ENCODE measurements at regions of chr3 and their contacts with region 1.

Region 1: DNA sequence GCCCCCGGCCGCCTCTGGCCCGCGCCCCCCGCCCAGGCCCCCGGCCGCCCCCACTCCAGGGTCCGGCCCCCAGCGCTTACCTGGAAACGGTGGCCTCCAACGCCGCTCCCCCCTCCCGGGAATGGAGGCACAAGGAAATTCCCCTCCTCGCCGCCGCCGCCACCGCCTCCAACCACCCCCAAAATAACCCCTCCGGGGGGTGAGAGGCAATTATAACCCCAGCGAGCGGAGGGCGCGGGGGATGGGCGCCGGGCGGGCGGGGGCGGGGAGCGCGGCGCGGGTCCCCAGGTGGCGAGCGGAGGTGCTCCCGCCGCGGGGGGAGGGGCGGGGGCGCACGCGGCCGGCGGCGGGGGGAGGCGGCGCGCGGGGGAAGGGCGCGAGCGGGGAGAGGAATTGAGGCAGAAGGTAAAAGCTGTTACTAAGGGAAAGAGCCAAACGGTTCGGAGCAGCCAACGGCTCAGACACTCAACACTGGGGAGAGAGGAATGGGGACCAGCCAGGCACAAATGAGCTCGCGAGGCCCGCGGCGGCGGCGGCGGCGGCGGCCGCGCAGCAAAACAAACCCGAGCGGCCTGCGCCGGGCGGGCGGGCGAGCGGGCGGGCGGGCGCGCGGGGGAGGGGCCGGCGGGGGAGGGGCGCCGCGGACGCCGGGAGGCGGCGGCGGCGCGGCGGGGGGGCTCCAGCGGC is at the start of gene TBL1XR1:
- DNase-seq: peak; percentile 94
- ATAC-seq: peak; percentile 77
- H3K4me3 ChIP-seq: peak within 1 kb of the TSS; percentile 96
- H3K27ac ChIP-seq: peak within 1 kb of the TSS; percentile 100
- H3K4me1 ChIP-seq: peaks cover 10% of the 10 kb centered on the region
- H3K27me3 ChIP-seq: no peaks in the 10 kb centered on the region
- CTCF ChIP-seq: no peak
- POLR2A ChIP-seq: no peak
- RAD21 ChIP-seq: peak; percentile 35; the same call in 1 of the 2 replicates
- total RNA-seq, gene TBL1XR1: 170 and 181 TPM in 2 replicates

Region 2: GRCh38 chr3:177050501-177051237 is 146.5 kb before region 1 on chr3:
- CTCF ChIA-PET with region 1: no interaction called
- POLR2A ChIA-PET with region 1: no interaction called
- dilution Hi-C with region 1: no loop called
- in situ Hi-C with region 1: no loop called
- intact Hi-C with region 1: loop called (anchors 1 kb)
- DNase-seq: peak; percentile 64
- ATAC-seq: peak; percentile 83
- H3K4me3 ChIP-seq: no peak overlapping the region
- H3K27ac ChIP-seq: no peak overlapping the region; the same call in 1 of the 2 replicates
- H3K4me1 ChIP-seq: no peaks in the 10 kb centered on the region
- H3K27me3 ChIP-seq: no peaks in the 10 kb centered on the region
- CTCF ChIP-seq: peak; percentile 64
- POLR2A ChIP-seq: 0 out of 2 replicates have a peak, but pooled peaks have one; percentile 35
- RAD21 ChIP-seq: peak; percentile 78

Region 3: GRCh38 chr3:177089110-177089509 is 108.1 kb before region 1 on chr3:
- CTCF ChIA-PET with region 1: no interaction called
- POLR2A ChIA-PET with region 1: no interaction called
- dilution Hi-C with region 1: no loop called
- in situ Hi-C with region 1: no loop called
- intact Hi-C with region 1: no loop called
- DNase-seq: no peak
- ATAC-seq: no peak; the same call in 1 of the 2 replicates
- H3K4me3 ChIP-seq: no peak overlapping the region
- H3K27ac ChIP-seq: no peak overlapping the region
- H3K4me1 ChIP-seq: peaks cover 5% of the 10 kb centered on the region
- H3K27me3 ChIP-seq: no peaks in the 10 kb centered on the region
- CTCF ChIP-seq: no peak
- POLR2A ChIP-seq: no peak
- RAD21 ChIP-seq: no peak

Region 4: GRCh38 chr3:177359593-177360357 is 162.6 kb after region 1 on chr3:
- CTCF ChIA-PET with region 1: no interaction called
- POLR2A ChIA-PET with region 1: interaction called, 3 read pairs
- dilution Hi-C with region 1: no loop called
- in situ Hi-C with region 1: loop called (anchors 5 kb)
- intact Hi-C with region 1: loop called (anchors 1 kb)
- DNase-seq: peak; percentile 99
- ATAC-seq: peak; percentile 90
- H3K4me3 ChIP-seq: peak overlapping the region; percentile 5; the same call in 1 of the 2 replicates
- H3K27ac ChIP-seq: peak overlapping the region; percentile 59
- H3K4me1 ChIP-seq: peaks cover 27% of the 10 kb centered on the region
- H3K27me3 ChIP-seq: no peaks in the 10 kb centered on the region
- CTCF ChIP-seq: no peak
- POLR2A ChIP-seq: 0 out of 2 replicates have a peak, but pooled peaks have one; percentile 28
- RAD21 ChIP-seq: peak; percentile 71

Region 5: DNA sequence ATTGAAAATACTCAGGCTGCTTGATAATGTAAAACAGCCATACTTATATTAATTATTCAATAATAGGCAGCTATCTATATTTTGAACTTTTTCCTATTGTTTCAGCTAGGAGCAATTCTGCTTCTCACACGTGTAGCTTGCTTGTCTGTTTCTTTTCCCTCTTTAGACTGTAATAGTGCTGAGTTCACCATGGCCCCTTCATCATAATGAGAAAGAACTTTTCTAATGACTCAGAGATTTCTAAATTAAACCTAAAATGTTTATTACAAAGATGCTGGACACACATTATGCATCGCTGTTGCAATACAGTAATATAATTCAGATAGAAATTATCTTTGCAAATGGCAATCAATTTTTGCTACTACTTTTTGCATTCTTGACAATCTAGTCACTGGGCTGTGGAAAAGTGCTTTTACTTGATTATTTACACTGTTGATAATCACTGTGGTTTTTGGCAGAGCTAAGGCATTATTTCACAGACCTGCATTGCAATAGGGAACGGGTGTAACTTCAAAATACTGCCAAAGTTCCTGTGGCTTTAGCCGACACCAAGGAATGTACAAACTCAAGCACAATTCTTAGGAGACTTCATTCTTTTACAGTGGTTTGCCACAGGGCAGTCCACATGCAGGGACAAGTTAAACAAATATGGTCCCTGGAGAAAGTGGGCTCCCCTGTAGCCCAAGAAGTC is 281.1 kb after region 1 on chr3:
- CTCF ChIA-PET with region 1: no interaction called
- POLR2A ChIA-PET with region 1: no interaction called
- dilution Hi-C with region 1: no loop called
- in situ Hi-C with region 1: no loop called
- intact Hi-C with region 1: loop called (anchors 1 kb)
- DNase-seq: peak; percentile 100
- ATAC-seq: peak; percentile 91
- H3K4me3 ChIP-seq: no peak overlapping the region
- H3K27ac ChIP-seq: peak overlapping the region; percentile 79; the same call in 1 of the 2 replicates
- H3K4me1 ChIP-seq: peaks cover 8% of the 10 kb centered on the region
- H3K27me3 ChIP-seq: no peaks in the 10 kb centered on the region
- CTCF ChIP-seq: no peak
- POLR2A ChIP-seq: no peak
- RAD21 ChIP-seq: peak; percentile 41

Region 6: DNA sequence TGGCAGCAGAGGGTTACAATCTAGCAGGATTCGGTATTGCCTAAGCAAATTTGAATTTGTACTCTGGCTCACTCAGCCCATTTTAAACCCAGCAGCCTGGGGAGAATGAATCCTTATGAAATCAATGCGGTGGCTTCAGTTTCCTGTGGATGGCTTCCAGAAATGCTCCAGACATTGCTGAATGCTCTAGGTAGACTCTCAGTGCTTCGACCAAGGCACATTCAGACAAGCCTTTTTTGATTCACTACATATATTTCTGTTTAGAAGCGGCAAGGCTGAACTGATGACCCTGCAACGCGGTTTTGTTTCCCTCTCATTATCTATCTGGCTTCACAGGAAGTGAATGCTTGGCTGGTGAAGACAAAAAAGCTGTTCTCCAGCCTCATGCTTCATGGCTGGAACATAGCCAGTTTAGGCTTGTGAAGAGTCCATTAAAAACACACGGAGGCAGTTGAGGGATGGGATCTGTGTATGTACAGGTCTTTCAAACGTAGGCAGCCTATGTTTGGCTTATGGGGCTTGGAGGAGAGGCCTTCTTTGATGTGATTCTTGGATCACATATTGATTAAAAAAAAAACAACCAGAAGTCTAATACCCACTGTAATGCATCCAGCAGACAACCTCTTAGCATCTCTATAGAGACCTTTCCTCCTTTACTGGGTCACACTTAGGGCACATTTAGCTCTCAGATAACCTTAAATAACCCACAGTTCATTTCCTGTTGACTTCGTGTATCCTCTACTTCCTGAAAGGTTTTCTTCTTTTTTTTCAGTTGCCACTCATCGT is 400.3 kb after region 1 on chr3:
- CTCF ChIA-PET with region 1: no interaction called
- POLR2A ChIA-PET with region 1: no interaction called
- dilution Hi-C with region 1: no loop called
- in situ Hi-C with region 1: no loop called
- intact Hi-C with region 1: loop called (anchors 10 kb)
- DNase-seq: peak; percentile 75
- ATAC-seq: peak; percentile 58
- H3K4me3 ChIP-seq: no peak overlapping the region
- H3K27ac ChIP-seq: peak overlapping the region; percentile 30
- H3K4me1 ChIP-seq: peaks cover 12% of the 10 kb centered on the region
- H3K27me3 ChIP-seq: no peaks in the 10 kb centered on the region
- CTCF ChIP-seq: no peak
- POLR2A ChIP-seq: no peak
- RAD21 ChIP-seq: no peak

Region 7: DNA sequence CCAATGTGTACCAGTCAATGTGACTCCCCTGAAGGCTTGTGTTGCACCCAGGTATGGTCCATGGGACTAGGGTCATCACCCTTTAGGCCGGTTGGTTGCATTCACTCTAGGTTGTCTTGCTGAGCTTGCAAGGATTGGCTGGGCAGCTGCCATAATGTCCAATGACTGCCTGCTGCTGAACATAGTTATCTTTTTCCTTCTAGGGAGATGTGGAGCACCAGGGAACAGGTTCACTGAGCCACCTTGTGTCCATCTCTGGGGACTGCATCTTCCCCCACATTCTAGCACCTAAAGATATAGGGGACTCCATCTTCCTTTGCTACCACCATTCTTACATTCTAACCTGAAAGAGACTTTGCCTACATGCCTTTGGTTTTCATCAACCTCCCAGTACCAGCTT is 580.5 kb after region 1 on chr3:
- CTCF ChIA-PET with region 1: no interaction called
- POLR2A ChIA-PET with region 1: interaction called, 3 read pairs
- dilution Hi-C with region 1: no loop called
- in situ Hi-C with region 1: no loop called
- intact Hi-C with region 1: loop called (anchors 1 kb)
- DNase-seq: peak; percentile 56
- ATAC-seq: peak; percentile 43; the same call in 1 of the 2 replicates
- H3K4me3 ChIP-seq: no peak overlapping the region
- H3K27ac ChIP-seq: no peak overlapping the region
- H3K4me1 ChIP-seq: peaks cover 20% of the 10 kb centered on the region
- H3K27me3 ChIP-seq: no peaks in the 10 kb centered on the region
- CTCF ChIP-seq: peak; percentile 57
- POLR2A ChIP-seq: no peak
- RAD21 ChIP-seq: peak; percentile 75

Region 8: GRCh38 chr3:177906126-177906511 is 708.9 kb after region 1 on chr3:
- CTCF ChIA-PET with region 1: no interaction called
- POLR2A ChIA-PET with region 1: no interaction called
- dilution Hi-C with region 1: no loop called
- in situ Hi-C with region 1: no loop called
- intact Hi-C with region 1: loop called (anchors 5 kb)
- DNase-seq: peak; percentile 83
- ATAC-seq: peak; percentile 63
- H3K4me3 ChIP-seq: no peak overlapping the region
- H3K27ac ChIP-seq: peak overlapping the region; percentile 77; the same call in 1 of the 2 replicates
- H3K4me1 ChIP-seq: peaks cover 12% of the 10 kb centered on the region
- H3K27me3 ChIP-seq: no peaks in the 10 kb centered on the region
- CTCF ChIP-seq: 0 out of 2 replicates have a peak, but pooled peaks have one; percentile 17
- POLR2A ChIP-seq: no peak
- RAD21 ChIP-seq: peak; percentile 30

Measured in IMR-90 (cell line).